GM12878 (cell line): ENCODE measurements at regions of chr5 and their contacts with region 1.

Region 1: DNA sequence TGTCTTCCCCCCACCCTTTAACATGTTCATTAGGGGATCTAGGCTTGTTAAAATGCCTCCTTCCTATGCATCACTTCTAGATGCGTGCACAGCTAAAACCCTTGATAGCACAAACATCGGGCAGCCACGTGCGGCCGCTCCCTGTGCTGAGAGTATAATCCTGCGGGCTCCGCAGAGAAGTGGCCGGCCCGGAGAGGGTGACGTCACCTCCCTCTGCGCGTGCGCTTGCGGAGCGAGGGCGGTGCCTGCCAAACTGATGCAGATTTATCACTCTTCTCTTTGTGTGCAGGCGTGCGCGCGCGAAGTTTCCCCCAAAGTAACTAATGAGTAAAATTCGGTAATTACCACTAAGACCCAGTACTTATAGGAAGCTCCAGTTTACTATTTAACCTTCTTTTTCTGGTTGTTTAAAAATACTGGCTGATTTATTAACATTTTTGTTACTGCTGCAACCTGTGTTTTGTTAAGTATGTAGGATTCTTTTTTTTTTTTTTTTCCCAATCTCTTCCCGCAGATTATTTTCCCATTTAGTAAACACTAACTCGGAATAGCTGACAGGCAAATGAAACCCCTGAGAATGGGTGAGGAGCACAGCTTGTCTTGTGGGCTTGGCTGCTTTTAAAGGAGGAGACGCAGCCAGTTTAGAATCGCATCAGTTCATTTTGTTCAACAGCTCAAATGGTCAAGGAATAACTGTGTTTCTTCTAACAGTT is 121.6 kb downstream of the TRIO start:
- DNase-seq: no peak
- ATAC-seq: peak; percentile 94
- H3K4me3 ChIP-seq: peak overlapping the region; percentile 4
- H3K27ac ChIP-seq: no peak overlapping the region; the same call in 1 of the 2 replicates
- H3K4me1 ChIP-seq: peaks cover 36% of the 10 kb centered on the region
- H3K27me3 ChIP-seq: no peaks in the 10 kb centered on the region
- CTCF ChIP-seq: no peak
- EP300 ChIP-seq: no peak
- POLR2A ChIP-seq: peak; percentile 51; the same call in 1 of the 2 replicates
- RAD21 ChIP-seq: 0 out of 2 replicates have a peak, but pooled peaks have one; percentile 12

Region 2: GRCh38 chr5:13346401-13346800 is 918.4 kb before region 1 on chr5:
- CTCF ChIA-PET with region 1: no interaction called
- POLR2A ChIA-PET with region 1: no interaction called
- RAD21 ChIA-PET with region 1: no interaction called
- SMC1A ChIA-PET with region 1: no interaction called
- in situ Hi-C with region 1: no loop called
- intact Hi-C with region 1: no loop called
- DNase-seq: no peak
- ATAC-seq: no peak
- H3K4me3 ChIP-seq: no peak overlapping the region
- H3K27ac ChIP-seq: no peak overlapping the region
- H3K4me1 ChIP-seq: no peaks in the 10 kb centered on the region
- H3K27me3 ChIP-seq: no peaks in the 10 kb centered on the region
- CTCF ChIP-seq: no peak
- EP300 ChIP-seq: no peak
- POLR2A ChIP-seq: no peak
- RAD21 ChIP-seq: no peak

Region 3: GRCh38 chr5:14078716-14079115 is 186.0 kb before region 1 on chr5:
- CTCF ChIA-PET with region 1: no interaction called
- POLR2A ChIA-PET with region 1: no interaction called
- RAD21 ChIA-PET with region 1: no interaction called
- SMC1A ChIA-PET with region 1: no interaction called
- in situ Hi-C with region 1: no loop called
- intact Hi-C with region 1: no loop called
- DNase-seq: no peak
- ATAC-seq: no peak
- H3K4me3 ChIP-seq: no peak overlapping the region
- H3K27ac ChIP-seq: no peak overlapping the region
- H3K4me1 ChIP-seq: no peaks in the 10 kb centered on the region
- H3K27me3 ChIP-seq: no peaks in the 10 kb centered on the region
- CTCF ChIP-seq: no peak
- EP300 ChIP-seq: no peak
- POLR2A ChIP-seq: no peak
- RAD21 ChIP-seq: no peak

Region 4: DNA sequence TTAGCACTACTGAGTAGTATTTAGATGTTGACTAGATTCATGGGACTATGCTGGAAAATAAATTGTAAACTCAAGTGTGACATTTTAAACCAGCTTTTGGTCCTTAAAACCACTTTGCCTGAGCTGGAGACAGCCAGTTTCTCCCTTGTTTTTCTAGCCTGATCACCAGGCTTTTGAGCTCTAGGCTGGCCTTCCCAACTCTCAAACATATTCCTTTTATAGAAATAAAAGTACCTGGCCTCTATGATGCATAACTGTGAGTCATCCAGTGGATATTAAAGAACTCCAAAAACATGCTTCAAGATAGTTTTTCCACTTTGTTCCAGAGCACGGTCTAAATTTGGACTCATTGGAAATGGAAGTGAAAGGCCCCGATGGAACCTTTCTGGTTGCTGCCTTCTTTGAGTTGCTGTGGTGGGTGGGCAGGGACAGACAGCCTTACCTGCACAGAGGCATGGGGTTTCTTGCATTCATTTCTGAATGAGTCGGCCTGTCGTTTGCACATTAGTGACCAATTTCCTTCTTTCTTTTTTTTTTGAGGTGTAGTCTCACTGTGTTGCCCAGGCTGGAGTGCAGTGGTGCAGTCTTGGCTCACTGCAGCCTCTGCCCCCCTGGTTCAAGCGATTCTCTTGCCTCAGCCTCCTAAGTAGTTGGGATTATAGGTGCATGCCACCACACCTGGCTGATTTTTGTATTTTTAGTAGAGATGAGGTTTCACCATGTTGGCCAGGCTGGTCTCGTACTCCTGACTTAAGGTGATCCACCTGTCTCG is 78.5 kb before region 1 on chr5:
- CTCF ChIA-PET with region 1: interaction called, 3 read pairs
- POLR2A ChIA-PET with region 1: interaction called, 10 read pairs
- RAD21 ChIA-PET with region 1: no interaction called
- SMC1A ChIA-PET with region 1: interaction called, 4 read pairs
- in situ Hi-C with region 1: no loop called
- intact Hi-C with region 1: no loop called
- DNase-seq: no peak
- ATAC-seq: peak; percentile 45
- H3K4me3 ChIP-seq: no peak overlapping the region
- H3K27ac ChIP-seq: peak overlapping the region; percentile 38; the same call in 1 of the 2 replicates
- H3K4me1 ChIP-seq: peaks cover 17% of the 10 kb centered on the region
- H3K27me3 ChIP-seq: no peaks in the 10 kb centered on the region
- CTCF ChIP-seq: no peak
- EP300 ChIP-seq: no peak
- POLR2A ChIP-seq: no peak
- RAD21 ChIP-seq: no peak

Region 5: GRCh38 chr5:14223372-14223771 is 41.4 kb before region 1 on chr5:
- CTCF ChIA-PET with region 1: interaction called, 8 read pairs
- POLR2A ChIA-PET with region 1: interaction called, 12 read pairs
- RAD21 ChIA-PET with region 1: interaction called, 6 read pairs
- SMC1A ChIA-PET with region 1: interaction called, 166 read pairs
- in situ Hi-C with region 1: no loop called
- intact Hi-C with region 1: no loop called
- DNase-seq: no peak
- ATAC-seq: no peak; the same call in 2 of the 3 replicates
- H3K4me3 ChIP-seq: no peak overlapping the region
- H3K27ac ChIP-seq: no peak overlapping the region
- H3K4me1 ChIP-seq: peaks cover 35% of the 10 kb centered on the region
- H3K27me3 ChIP-seq: no peaks in the 10 kb centered on the region
- CTCF ChIP-seq: no peak
- EP300 ChIP-seq: no peak
- POLR2A ChIP-seq: no peak
- RAD21 ChIP-seq: no peak

Region 6: GRCh38 chr5:15650266-15650665 is 1385.5 kb after region 1 on chr5:
- CTCF ChIA-PET with region 1: no interaction called
- POLR2A ChIA-PET with region 1: no interaction called
- RAD21 ChIA-PET with region 1: no interaction called
- SMC1A ChIA-PET with region 1: no interaction called
- in situ Hi-C with region 1: no loop called
- intact Hi-C with region 1: no loop called
- DNase-seq: no peak
- ATAC-seq: no peak
- H3K4me3 ChIP-seq: no peak overlapping the region
- H3K27ac ChIP-seq: no peak overlapping the region
- H3K4me1 ChIP-seq: no peaks in the 10 kb centered on the region
- H3K27me3 ChIP-seq: no peaks in the 10 kb centered on the region
- CTCF ChIP-seq: no peak
- EP300 ChIP-seq: no peak
- POLR2A ChIP-seq: no peak
- RAD21 ChIP-seq: no peak